ENCODE measurements at regions of chr7 and their contacts with region 1.

Region 1: DNA sequence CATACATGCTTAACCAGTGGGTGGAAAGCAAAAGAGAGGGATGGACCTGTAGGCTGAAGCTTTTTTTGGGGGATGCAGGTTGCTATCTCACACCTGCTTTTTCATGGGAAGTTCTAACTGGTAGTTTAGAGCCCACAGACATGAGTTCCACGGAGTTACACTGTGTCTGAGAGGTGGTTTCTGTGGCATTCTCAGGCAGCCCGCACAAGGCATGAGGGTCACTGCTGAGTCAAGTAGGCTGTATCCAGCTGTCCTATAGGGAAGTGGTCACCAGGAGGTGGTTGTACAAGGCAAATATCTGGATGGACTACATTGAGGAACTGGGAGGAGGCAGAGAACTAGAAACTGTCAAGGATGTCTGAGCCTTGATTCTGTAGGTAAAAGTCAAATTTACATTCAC is 351.0 kb upstream of the POM121L12 start:
- DNase-seq: no peak
- ATAC-seq: no peak

Region 2: GRCh38 chr7:51080622-51081269 is 1603.6 kb before region 1 on chr7:
- intact Hi-C with region 1: no loop called
- DNase-seq: no peak
- ATAC-seq: no peak

Region 3: DNA sequence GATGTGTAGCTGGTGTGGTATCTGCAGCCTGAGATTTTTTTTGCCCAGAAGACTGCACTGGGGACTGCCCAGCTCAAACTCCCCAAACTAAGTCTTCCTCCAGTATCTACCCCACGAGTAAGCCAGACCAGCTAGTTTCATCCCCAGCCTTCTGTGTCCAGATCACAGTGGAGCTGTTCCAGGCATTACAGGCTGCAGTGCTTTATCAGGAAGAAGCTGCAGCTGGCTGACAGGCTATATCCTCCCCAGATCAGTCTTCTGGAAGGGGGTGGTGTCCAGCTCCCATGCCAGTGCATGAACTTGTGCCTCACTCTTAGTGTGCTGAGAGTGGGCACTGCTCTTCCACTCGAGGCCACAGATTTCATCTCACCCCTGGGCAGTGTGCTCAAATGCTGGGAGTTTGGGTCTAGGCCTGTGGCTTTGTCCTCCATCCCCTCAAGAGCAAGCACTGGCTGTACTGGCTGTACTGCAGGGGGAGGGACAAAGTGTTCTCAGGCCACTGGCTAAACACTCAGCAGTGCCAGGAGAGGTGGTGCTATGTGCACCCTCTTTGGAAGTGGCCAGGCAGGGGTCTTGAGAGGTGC is 688.7 kb before region 1 on chr7:
- intact Hi-C with region 1: loop called (anchors 5 kb)
- DNase-seq: no peak
- ATAC-seq: no peak

Measured in sciatic nerve (tissue), 2 donors.